PC-3 (cell line): ENCODE measurements at regions of chr4 and their contacts with region 1.

Region 1: GRCh38 chr4:60201057-60201673 is 999.0 kb upstream of the ADGRL3 start:
- DNase-seq: peak; percentile 82
- ATAC-seq: peak; percentile 57
- H3K4me3 ChIP-seq: no peak overlapping the region
- H3K27ac ChIP-seq: no peak overlapping the region
- H3K4me1 ChIP-seq: no peaks in the 10 kb centered on the region
- H3K27me3 ChIP-seq: no peaks in the 10 kb centered on the region
- CTCF ChIP-seq: peak; percentile 99

Region 2: DNA sequence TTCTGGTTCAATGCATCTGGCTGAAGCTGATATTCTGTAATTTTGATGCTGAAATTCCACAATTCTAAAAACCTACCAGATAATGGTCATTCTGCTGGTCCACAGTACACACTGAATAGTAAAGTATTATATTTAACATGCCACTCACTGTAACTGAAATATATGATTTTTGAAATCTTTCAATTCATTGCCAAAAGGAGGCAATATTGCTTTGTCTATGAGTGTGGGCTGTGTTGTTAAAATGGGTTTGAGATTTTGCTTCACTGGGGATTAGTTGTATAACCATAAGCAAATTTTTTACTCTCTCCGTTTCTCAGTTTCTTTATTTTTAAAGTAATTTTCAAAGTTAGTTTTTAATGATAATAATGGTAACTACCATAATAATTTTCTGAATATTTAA is 1686.9 kb before region 1 on chr4:
- CTCF ChIA-PET with region 1: no interaction called
- POLR2A ChIA-PET with region 1: no interaction called
- intact Hi-C with region 1: loop called (anchors 5 kb)
- DNase-seq: peak; percentile 43
- ATAC-seq: peak; percentile 48; the same call in 1 of the 2 replicates
- H3K4me3 ChIP-seq: no peak overlapping the region
- H3K27ac ChIP-seq: no peak overlapping the region
- H3K4me1 ChIP-seq: no peaks in the 10 kb centered on the region
- H3K27me3 ChIP-seq: no peaks in the 10 kb centered on the region
- CTCF ChIP-seq: peak; percentile 43; the same call in 1 of the 2 replicates

Region 3: DNA sequence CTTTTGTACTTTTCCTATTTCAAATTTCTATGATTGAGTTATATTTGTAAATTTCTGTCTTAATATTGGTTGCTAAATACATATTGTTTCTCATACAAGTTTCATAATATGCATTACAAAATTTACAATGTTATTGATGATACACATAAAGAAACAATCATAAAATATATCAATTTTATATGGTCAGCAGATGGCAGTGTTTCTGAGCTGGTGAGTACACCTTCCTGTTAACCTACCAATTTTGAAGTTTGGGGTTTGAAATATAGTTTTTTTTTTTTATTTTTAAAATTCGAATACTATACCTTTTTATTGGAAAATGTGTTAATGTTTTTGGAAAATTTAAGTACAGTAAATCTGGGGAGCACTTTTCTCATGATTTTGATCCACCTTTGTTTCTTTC is 954.1 kb before region 1 on chr4:
- CTCF ChIA-PET with region 1: no interaction called
- POLR2A ChIA-PET with region 1: no interaction called
- intact Hi-C with region 1: loop called (anchors 1 kb)
- DNase-seq: peak; percentile 51
- ATAC-seq: no peak
- H3K4me3 ChIP-seq: no peak overlapping the region
- H3K27ac ChIP-seq: no peak overlapping the region
- H3K4me1 ChIP-seq: no peaks in the 10 kb centered on the region
- H3K27me3 ChIP-seq: no peaks in the 10 kb centered on the region
- CTCF ChIP-seq: peak; percentile 70

Region 4: DNA sequence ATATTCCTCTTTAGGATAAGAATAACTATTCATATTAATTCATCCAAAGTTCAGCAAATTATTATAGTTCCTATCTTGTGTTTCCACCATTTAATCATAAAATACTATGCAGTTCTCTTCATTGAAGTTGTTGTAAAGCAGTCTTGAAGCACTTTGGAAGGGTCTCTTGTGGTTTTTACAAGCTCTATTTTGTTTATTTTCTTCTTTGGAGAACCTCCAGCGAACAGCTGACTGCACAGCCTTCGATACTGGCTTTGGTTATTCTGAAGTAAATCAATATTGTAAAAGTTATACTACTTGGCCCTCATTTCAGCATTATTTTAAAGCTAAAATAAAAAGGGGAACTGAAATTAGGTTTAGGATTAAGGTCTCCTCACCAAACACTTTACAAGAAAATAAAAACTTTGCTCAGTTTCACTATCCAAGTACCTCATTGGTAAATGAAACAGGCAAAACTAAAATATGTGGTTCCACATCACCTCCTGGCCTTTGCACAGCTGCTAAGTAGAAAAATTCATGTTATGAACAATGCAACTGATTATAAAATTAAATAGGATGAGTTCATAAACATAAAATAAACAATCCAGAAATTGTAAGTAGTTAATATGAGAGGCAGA is 630.2 kb before region 1 on chr4:
- CTCF ChIA-PET with region 1: no interaction called
- POLR2A ChIA-PET with region 1: no interaction called
- intact Hi-C with region 1: loop called (anchors 10 kb)
- DNase-seq: no peak
- ATAC-seq: no peak
- H3K4me3 ChIP-seq: no peak overlapping the region
- H3K27ac ChIP-seq: no peak overlapping the region
- H3K4me1 ChIP-seq: no peaks in the 10 kb centered on the region; the same call in 1 of the 2 replicates
- H3K27me3 ChIP-seq: no peaks in the 10 kb centered on the region
- CTCF ChIP-seq: no peak

Region 5: DNA sequence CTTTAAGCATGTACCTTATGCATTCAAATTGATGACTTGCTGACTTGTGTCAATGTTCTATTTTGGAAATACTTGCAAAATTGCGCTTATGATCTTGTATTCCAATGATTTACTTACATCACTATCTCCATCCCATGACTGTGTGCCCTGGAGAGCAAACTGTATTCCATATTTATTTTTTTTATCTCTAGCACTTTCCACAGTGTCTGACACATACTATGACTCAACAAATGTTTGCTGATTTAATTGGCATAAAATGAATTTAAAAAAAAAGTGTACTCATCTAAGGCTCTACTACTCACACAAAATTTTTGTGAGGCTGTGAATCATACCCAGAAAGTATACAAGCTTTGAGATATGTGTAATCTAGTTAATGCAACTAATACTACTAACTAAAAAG is 67.8 kb before region 1 on chr4:
- CTCF ChIA-PET with region 1: no interaction called
- POLR2A ChIA-PET with region 1: no interaction called
- intact Hi-C with region 1: no loop called
- DNase-seq: peak; percentile 80
- ATAC-seq: peak; percentile 94
- H3K4me3 ChIP-seq: no peak overlapping the region
- H3K27ac ChIP-seq: no peak overlapping the region
- H3K4me1 ChIP-seq: peaks cover 9% of the 10 kb centered on the region; the same call in 1 of the 2 replicates
- H3K27me3 ChIP-seq: no peaks in the 10 kb centered on the region
- CTCF ChIP-seq: no peak

Region 6: DNA sequence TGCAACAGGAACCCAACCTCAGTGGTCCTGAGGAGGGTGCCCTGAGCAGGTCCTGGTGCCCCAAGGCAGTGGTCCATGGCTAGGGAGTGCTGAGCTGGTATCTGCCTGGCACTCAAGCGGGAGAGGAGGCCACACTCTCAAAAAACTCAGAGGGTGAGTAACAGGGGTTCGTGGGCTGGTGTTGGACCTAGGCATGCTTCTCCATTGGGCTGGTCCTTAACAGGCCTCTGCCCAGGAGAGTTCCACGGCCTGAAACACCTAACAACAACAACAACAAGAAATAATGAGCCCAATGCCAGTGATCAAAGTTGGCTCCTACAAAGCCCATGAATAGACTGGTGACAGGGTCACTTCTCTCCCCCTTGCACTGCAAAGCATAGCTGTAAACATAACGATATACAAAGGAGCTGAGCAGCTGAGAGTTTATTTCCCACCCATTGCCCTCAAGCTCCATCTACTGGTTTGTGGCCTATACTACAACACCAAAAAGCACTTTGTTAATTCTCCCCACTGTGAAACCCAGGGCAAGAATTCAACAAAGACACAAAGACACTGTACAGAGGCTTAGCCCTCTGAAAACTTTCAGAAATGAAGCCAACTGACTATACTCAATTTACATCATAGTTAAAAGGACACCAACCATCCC is 262.8 kb after region 1 on chr4:
- CTCF ChIA-PET with region 1: no interaction called
- POLR2A ChIA-PET with region 1: no interaction called
- intact Hi-C with region 1: loop called (anchors 1 kb)
- DNase-seq: peak; percentile 70
- ATAC-seq: peak; percentile 80
- H3K4me3 ChIP-seq: no peak overlapping the region
- H3K27ac ChIP-seq: no peak overlapping the region
- H3K4me1 ChIP-seq: no peaks in the 10 kb centered on the region
- H3K27me3 ChIP-seq: no peaks in the 10 kb centered on the region
- CTCF ChIP-seq: peak; percentile 81

Region 7: GRCh38 chr4:60656171-60656570 is 455.0 kb after region 1 on chr4:
- CTCF ChIA-PET with region 1: no interaction called
- POLR2A ChIA-PET with region 1: no interaction called
- intact Hi-C with region 1: loop called (anchors 10 kb)
- DNase-seq: peak; percentile 44
- ATAC-seq: no peak; the same call in 1 of the 2 replicates
- H3K4me3 ChIP-seq: no peak overlapping the region
- H3K27ac ChIP-seq: no peak overlapping the region
- H3K4me1 ChIP-seq: 0 out of 2 replicates have a peak, but pooled peaks cover 4% of the 10 kb centered on the region
- H3K27me3 ChIP-seq: no peaks in the 10 kb centered on the region
- CTCF ChIP-seq: peak; percentile 84